Activated CD4-positive, alpha-beta T cell treated with anti-CD3 and anti-CD28 coated beads for 36 hours (primary cell): ENCODE measurements at regions of chr14 and their contacts with region 1.

Region 1: GRCh38 chr14:91774140-91775096 is 42.5 kb upstream of the CATSPERB start:
- DNase-seq: no peak
- ATAC-seq: no peak
- H3K4me3 Mint-ChIP-seq: no peak overlapping the region
- H3K27ac Mint-ChIP-seq: no peak overlapping the region
- H3K4me1 Mint-ChIP-seq: peaks cover 20% of the 10 kb centered on the region
- H3K27me3 Mint-ChIP-seq: no peaks in the 10 kb centered on the region

Region 2: DNA sequence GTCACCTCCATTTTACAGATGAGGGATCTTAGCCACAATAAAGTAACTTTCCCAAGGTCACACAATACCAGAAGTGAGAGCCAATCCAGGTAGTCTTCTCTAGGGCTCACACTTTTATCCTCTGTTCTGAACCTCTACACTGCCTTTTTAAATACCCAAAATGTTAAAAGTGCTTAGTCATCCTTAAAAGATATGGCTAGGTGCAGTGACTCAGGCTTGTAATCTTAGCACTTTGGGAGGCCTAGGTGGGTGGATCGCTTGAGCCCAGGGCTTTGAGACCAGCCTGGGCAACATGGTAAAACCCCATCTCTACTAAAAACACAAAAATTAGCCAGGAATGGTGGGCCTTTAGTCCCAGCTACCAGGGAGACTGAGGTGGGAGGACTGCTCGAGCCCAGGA is 160.2 kb before region 1 on chr14:
- CTCF ChIA-PET with region 1: no interaction called
- POLR2A ChIA-PET with region 1: no interaction called
- intact Hi-C with region 1: no loop called
- DNase-seq: no peak
- ATAC-seq: peak; percentile 49
- H3K4me3 Mint-ChIP-seq: no peak overlapping the region
- H3K27ac Mint-ChIP-seq: no peak overlapping the region
- H3K4me1 Mint-ChIP-seq: peaks cover 6% of the 10 kb centered on the region
- H3K27me3 Mint-ChIP-seq: no peaks in the 10 kb centered on the region

Region 3: DNA sequence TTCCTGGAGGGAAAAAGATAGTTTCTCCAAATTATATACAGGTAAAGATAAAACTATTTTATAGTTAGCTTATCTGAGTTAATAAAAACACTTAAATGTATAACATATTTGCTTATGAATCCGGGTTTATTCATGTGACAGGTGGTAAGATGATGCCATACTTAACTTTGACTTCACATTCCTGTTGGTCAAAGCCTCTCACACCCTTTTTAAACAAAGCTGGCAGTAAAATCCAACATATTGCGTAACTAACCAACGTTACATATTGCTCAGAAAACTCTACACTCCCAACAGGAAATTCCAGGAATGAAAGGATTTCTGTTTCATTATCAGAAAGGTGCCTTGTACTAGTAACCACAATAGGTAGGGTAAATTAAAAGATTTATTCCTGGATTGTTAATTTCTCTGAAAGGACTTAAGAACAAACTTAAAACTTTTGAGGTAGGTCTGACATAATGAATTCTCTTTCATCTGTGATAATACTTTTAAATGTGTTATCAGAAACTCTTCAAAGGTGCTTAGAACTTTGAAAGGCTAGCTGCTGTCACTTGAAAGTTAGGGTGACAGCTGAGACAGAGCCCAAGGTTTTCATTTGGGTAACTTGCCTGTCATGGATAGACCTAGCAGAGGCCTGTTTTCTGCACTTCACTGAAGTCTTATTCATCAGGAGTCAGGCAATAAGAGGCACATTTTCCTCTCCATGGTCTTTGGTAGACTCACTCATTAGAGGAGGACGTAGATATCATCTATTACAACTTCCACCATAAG is 18.7 kb before region 1 on chr14:
- CTCF ChIA-PET with region 1: no interaction called
- POLR2A ChIA-PET with region 1: no interaction called
- intact Hi-C with region 1: no loop called
- DNase-seq: no peak
- ATAC-seq: no peak
- H3K4me3 Mint-ChIP-seq: no peak overlapping the region
- H3K27ac Mint-ChIP-seq: no peak overlapping the region
- H3K4me1 Mint-ChIP-seq: no peaks in the 10 kb centered on the region
- H3K27me3 Mint-ChIP-seq: no peaks in the 10 kb centered on the region

Region 4: DNA sequence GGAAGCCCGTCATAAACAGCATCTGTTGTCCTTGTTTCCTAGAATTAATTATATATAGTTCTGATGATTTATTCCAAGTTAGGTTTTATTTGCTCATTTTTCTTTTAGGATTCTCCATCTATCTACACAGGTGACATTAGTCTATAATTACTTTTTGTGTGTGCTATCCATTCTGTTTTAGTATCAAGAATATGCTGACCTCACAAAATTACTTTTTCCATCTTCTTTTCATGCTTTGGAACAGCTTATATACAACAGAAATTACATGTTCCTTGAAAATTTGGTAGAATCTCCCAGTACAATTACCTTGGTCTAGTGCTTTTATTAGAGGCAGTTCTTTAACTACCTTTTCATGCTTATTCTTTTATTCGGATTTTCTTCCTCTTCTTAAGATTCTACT is 11.8 kb after region 1 on chr14:
- CTCF ChIA-PET with region 1: interaction called, 10 read pairs
- POLR2A ChIA-PET with region 1: no interaction called
- intact Hi-C with region 1: no loop called
- DNase-seq: no peak
- ATAC-seq: no peak
- H3K4me3 Mint-ChIP-seq: no peak overlapping the region
- H3K27ac Mint-ChIP-seq: no peak overlapping the region
- H3K4me1 Mint-ChIP-seq: no peaks in the 10 kb centered on the region
- H3K27me3 Mint-ChIP-seq: no peaks in the 10 kb centered on the region

Region 5: GRCh38 chr14:92531106-92531873 is 756.9 kb after region 1 on chr14:
- CTCF ChIA-PET with region 1: no interaction called
- POLR2A ChIA-PET with region 1: no interaction called
- intact Hi-C with region 1: no loop called
- DNase-seq: peak; percentile 70
- ATAC-seq: peak; percentile 62
- H3K4me3 Mint-ChIP-seq: peak overlapping the region; percentile 14
- H3K27ac Mint-ChIP-seq: peak overlapping the region; percentile 89
- H3K4me1 Mint-ChIP-seq: peaks cover 62% of the 10 kb centered on the region
- H3K27me3 Mint-ChIP-seq: no peaks in the 10 kb centered on the region